CD4-positive, alpha-beta T cell (primary cell): ENCODE measurements at regions of chr1 and their contacts with region 1.

Region 1: DNA sequence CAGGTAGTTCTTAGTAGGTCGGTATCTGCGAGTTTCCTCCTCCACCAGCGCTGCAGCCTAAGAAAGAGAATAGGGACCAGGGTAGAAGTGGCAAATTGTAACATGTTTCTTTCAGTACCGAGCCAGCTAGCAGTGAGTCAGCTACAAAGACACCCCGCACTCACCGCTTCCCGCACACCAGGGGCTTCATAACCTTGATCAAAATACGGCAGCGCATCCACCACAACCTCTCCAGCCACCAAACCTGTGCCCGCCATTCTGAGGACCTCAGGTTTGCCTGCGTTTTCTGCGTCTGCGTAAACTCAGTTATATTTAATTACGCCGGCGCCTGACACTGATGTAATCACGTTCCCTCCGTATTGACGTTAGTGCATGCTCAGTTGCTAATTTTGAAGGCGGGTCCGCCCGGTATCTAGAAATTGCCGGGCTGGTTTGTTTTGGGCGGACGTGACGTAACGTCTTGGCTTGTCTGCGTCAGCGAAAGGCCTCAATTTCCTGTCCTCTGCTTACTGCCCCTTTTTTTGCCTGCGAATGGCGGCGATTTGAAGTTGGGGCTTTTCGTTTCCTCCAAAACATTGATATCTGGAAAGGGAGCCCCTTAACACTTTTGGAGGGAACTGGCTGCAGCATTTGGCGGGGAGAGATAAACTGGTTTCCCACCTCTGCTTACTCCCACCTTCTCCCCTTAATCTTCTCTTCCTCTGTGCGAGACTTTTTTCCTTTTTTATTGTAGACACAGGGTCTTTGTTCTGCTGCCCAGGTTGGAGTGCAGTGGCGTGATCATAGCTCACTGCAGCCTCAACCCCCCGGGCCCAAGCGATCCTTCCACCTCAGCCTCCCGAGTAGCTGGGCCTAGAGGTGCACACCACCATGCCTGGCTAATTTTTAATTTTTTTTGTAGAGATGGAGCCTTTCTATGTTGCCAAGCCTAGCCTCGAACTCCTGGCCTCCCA is at the start of gene BCAS2:
- DNase-seq: peak; percentile 88 to 99 (median 92)
- ATAC-seq: peak; percentile 92
- H3K4me3 ChIP-seq: peak within 1 kb of the TSS; percentile 86
- H3K4me3 Mint-ChIP-seq: peak within 1 kb of the TSS; percentile 95
- H3K27ac ChIP-seq: peak within 1 kb of the TSS; percentile 82 to 97
- H3K27ac Mint-ChIP-seq: peak within 1 kb of the TSS; percentile 97
- H3K4me1 ChIP-seq: peaks cover 26% of the 10 kb centered on the region
- H3K4me1 Mint-ChIP-seq: peaks cover 48% of the 10 kb centered on the region
- H3K27me3 ChIP-seq: no peaks in the 10 kb centered on the region
- H3K27me3 Mint-ChIP-seq: no peaks in the 10 kb centered on the region
- CTCF ChIP-seq: no peak
- total RNA-seq, gene BCAS2: 109 to 111 TPM

Region 2: DNA sequence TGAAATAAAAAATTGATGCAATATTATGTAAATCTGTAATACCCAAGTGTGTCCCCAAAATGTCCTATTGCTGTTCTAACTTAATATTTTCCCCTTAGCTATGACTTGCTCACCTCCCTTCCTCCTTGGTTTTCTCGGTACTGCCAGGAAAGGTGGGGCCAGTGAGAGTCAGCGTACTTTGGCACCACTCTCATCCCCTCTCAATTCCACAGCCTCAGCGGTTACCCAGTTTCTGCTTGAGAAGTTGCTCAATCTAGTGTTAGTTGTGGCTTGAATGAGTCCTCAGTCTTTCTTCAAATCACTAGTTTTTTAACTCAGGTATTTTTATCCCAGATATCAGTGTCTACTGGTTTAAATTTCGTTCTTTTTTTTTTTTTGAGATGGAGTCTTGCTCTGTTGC is 32.5 kb before region 1 on chr1:
- CTCF ChIA-PET with region 1: no interaction called
- POLR2A ChIA-PET with region 1: no interaction called
- intact Hi-C with region 1: no loop called
- DNase-seq: no peak
- ATAC-seq: no peak
- H3K4me3 ChIP-seq: no peak overlapping the region
- H3K4me3 Mint-ChIP-seq: no peak overlapping the region
- H3K27ac ChIP-seq: no peak overlapping the region
- H3K27ac Mint-ChIP-seq: no peak overlapping the region
- H3K4me1 ChIP-seq: no peaks in the 10 kb centered on the region
- H3K4me1 Mint-ChIP-seq: no peaks in the 10 kb centered on the region
- H3K27me3 ChIP-seq: no peaks in the 10 kb centered on the region
- H3K27me3 Mint-ChIP-seq: peaks cover 4% of the 10 kb centered on the region
- CTCF ChIP-seq: no peak

Region 3: DNA sequence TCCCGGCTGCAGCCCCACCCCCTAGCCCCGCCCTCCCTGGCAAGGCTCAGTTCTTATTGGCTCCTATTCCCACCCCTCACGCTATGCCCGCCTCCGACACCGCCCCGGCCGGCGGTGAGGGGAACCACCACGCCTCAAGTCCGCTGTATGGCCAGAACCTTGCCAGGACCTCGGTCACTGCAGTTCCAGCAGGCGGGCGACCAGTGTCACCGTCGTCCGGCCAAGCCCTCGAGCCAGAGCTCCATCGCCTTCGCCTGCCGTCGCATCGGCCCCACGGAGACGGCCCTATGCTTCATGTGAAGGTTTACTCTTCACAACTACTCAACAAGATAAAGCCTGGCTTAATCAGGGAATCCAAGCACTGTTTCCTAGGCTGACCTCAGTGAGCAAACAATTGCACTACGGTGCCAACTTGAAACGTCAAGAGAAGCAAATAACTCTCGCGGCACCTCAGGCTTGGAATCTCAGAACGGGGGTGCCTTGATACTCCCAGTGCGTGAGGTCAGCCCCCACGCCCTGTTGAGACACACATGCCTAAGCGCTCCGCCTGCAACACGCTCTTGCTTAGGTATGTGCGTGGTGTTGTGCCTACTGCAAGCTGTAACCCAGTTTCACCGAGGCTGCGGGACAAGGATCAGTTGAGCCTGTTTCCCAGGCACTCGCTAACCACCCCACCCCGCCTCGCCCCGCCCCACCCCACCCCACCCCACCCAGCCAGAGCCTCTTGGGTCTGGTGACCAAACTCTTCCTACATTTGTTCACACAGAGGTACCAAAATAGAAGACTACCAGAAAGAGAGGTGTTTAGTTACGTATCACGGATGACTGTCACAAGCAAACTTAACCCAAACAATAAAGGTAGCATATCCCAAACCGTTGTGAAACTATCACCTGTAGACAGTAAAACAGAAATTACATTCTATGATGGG is 88.7 kb after region 1 on chr1:
- CTCF ChIA-PET with region 1: no interaction called
- POLR2A ChIA-PET with region 1: interaction called, 3 read pairs
- intact Hi-C with region 1: loop called (anchors 2 kb)
- DNase-seq: peak; percentile 74 to 93 (median 84)
- ATAC-seq: peak; percentile 94
- H3K4me3 ChIP-seq: peak overlapping the region; percentile 81
- H3K4me3 Mint-ChIP-seq: peak overlapping the region; percentile 99
- H3K27ac ChIP-seq: no peak overlapping the region
- H3K27ac Mint-ChIP-seq: peak overlapping the region; percentile 77
- H3K4me1 ChIP-seq: peaks cover 14% of the 10 kb centered on the region
- H3K4me1 Mint-ChIP-seq: peaks cover 12% of the 10 kb centered on the region
- H3K27me3 ChIP-seq: peaks cover 5 to 8% of the 10 kb centered on the region in 2 experiments
- H3K27me3 Mint-ChIP-seq: peaks cover 28% of the 10 kb centered on the region
- CTCF ChIP-seq: no peak

Region 4: GRCh38 chr1:114716304-114717170 is 134.9 kb after region 1 on chr1 and contains the start of gene NRAS:
- CTCF ChIA-PET with region 1: interaction called, 4 read pairs
- POLR2A ChIA-PET with region 1: interaction called, 12 read pairs
- intact Hi-C with region 1: loop called (anchors 1 to 2 kb)
- DNase-seq: peak; percentile 87 to 97 (median 94)
- ATAC-seq: peak; percentile 96
- H3K4me3 ChIP-seq: peak within 1 kb of the TSS; percentile 72
- H3K4me3 Mint-ChIP-seq: peak within 1 kb of the TSS; percentile 91
- H3K27ac ChIP-seq: peak within 1 kb of the TSS; percentile 83 to 96
- H3K27ac Mint-ChIP-seq: peak within 1 kb of the TSS; percentile 98
- H3K4me1 ChIP-seq: peaks cover 16% of the 10 kb centered on the region
- H3K4me1 Mint-ChIP-seq: peaks cover 21% of the 10 kb centered on the region
- H3K27me3 ChIP-seq: no peaks in the 10 kb centered on the region
- H3K27me3 Mint-ChIP-seq: no peaks in the 10 kb centered on the region
- CTCF ChIP-seq: no peak
- total RNA-seq, gene NRAS: 28.9 to 30.4 TPM

Region 5: DNA sequence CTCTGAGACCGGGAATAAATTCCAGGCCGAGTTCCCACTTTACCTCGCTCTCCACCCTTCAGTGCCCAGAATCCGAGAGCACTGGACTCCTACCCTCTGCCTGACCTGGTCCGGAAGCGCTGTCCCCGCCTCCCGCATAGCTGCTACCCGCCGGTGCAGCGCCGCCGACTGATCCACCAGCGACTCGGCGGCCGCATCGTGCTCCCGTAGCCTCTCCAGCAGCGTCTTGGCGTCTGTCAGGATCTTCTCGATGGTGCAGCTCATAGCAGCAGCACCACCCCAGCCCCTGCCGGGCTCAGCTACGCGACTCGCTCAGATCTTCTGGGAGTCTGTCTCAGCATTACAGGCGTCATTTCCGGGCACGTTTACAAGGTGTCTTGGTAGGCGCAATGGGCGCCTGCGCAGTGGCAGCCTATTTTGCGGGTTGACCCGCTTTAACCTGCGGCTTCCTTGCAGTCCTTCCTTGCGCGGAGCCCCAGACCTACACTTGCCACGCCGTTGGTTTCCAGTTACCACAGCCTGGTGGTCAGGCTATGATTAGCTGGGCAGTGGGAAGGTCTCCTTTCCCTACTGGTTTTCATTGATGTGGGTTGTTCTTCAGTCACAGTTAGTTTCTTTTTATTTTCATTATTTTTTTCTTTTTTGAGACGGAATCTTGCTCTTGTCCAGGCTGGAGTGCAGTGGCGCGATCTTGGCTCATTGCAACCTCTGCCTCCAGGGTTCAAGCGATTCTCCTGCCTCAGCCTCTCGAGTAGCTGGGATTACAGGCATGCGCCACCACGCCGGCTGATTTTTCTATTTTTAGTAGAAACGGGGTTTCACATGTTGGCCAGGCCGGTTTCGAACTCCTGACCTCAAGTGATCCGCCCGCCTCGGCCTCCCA is 199.0 kb after region 1 on chr1 and contains the start of gene SIKE1:
- CTCF ChIA-PET with region 1: no interaction called
- POLR2A ChIA-PET with region 1: interaction called, 8 read pairs
- intact Hi-C with region 1: loop called in 1 of 2 experiments (anchors 5 kb)
- DNase-seq: peak; percentile 87 to 98 (median 92)
- ATAC-seq: peak; percentile 98
- H3K4me3 ChIP-seq: peak within 1 kb of the TSS; percentile 84
- H3K4me3 Mint-ChIP-seq: peak within 1 kb of the TSS; percentile 100
- H3K27ac ChIP-seq: peak within 1 kb of the TSS; percentile 88 to 90
- H3K27ac Mint-ChIP-seq: peak within 1 kb of the TSS; percentile 96
- H3K4me1 ChIP-seq: peaks cover 11% of the 10 kb centered on the region
- H3K4me1 Mint-ChIP-seq: peaks cover 36% of the 10 kb centered on the region
- H3K27me3 ChIP-seq: no peaks in the 10 kb centered on the region
- H3K27me3 Mint-ChIP-seq: no peaks in the 10 kb centered on the region
- CTCF ChIP-seq: no peak
- total RNA-seq, gene SIKE1: 69.8 to 75.3 TPM

Region 6: GRCh38 chr1:115089420-115090185 is 508.0 kb after region 1 on chr1 and contains the start of gene TSPAN2:
- CTCF ChIA-PET with region 1: no interaction called
- POLR2A ChIA-PET with region 1: no interaction called
- intact Hi-C with region 1: loop called in 1 of 2 experiments (anchors 5 kb)
- DNase-seq: peak; percentile 31 to 80 (median 52)
- ATAC-seq: peak; percentile 85
- H3K4me3 ChIP-seq: peak within 1 kb of the TSS; percentile 78
- H3K4me3 Mint-ChIP-seq: peak within 1 kb of the TSS; percentile 88
- H3K27ac ChIP-seq: no peak within 1 kb of the TSS
- H3K27ac Mint-ChIP-seq: peak within 1 kb of the TSS; percentile 73
- H3K4me1 ChIP-seq: peaks cover 42% of the 10 kb centered on the region
- H3K4me1 Mint-ChIP-seq: peaks cover 54% of the 10 kb centered on the region
- H3K27me3 ChIP-seq: no peaks in the 10 kb centered on the region
- H3K27me3 Mint-ChIP-seq: peaks cover 4% of the 10 kb centered on the region
- CTCF ChIP-seq: no peak
- total RNA-seq, gene TSPAN2: 0.95 to 1.6 TPM